Activated naive CD4-positive, alpha-beta T cell treated with anti-CD3 and anti-CD28 coated beads for 36 hours (primary cell): ENCODE measurements at regions of chr5 and their contacts with region 1.

Region 1: GRCh38 chr5:56270568-56271392 is 37.6 kb upstream of the ANKRD55 start:
- DNase-seq: peak; percentile 88
- H3K4me3 Mint-ChIP-seq: peak overlapping the region; percentile 17
- H3K27ac Mint-ChIP-seq: peak overlapping the region; percentile 61
- H3K4me1 Mint-ChIP-seq: peaks cover 17% of the 10 kb centered on the region
- H3K27me3 Mint-ChIP-seq: no peaks in the 10 kb centered on the region

Region 2: GRCh38 chr5:54969856-54970828 is 1300.6 kb before region 1 on chr5:
- CTCF ChIA-PET with region 1: no interaction called
- intact Hi-C with region 1: no loop called
- DNase-seq: no peak
- H3K4me3 Mint-ChIP-seq: no peak overlapping the region
- H3K27ac Mint-ChIP-seq: no peak overlapping the region
- H3K4me1 Mint-ChIP-seq: no peaks in the 10 kb centered on the region
- H3K27me3 Mint-ChIP-seq: no peaks in the 10 kb centered on the region

Region 3: DNA sequence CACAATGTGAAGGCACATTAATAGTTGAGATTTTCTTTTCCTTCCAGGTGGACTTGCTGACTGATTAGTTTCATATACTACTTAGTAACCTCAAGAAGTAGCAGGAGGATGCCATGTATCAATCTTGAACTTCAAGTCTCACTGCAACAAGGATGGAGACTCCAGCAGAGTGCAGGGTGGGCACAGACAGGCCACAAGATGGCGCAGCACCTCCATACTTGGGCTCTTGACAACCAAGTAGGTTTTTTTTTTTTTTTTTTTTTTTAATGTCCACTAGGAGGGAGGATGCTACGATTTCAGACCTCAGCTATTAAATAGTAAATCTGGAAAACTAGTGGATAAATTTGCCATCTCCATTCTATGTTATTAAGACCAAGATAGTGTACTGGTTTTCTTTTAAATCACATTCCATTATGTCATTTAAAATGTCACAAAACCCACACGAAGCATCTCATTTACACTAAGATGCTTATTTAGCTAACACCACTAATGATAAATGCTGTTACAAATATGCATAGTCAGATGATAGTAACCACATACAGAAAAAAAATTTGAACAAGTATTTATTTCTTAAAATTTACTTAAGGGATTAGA is 334.6 kb before region 1 on chr5:
- CTCF ChIA-PET with region 1: interaction called, 8 read pairs
- intact Hi-C with region 1: loop called (anchors 5 kb)
- DNase-seq: peak; percentile 93
- H3K4me3 Mint-ChIP-seq: no peak overlapping the region
- H3K27ac Mint-ChIP-seq: no peak overlapping the region
- H3K4me1 Mint-ChIP-seq: peaks cover 15% of the 10 kb centered on the region
- H3K27me3 Mint-ChIP-seq: no peaks in the 10 kb centered on the region

Region 4: GRCh38 chr5:56388229-56389010 is 117.6 kb after region 1 on chr5:
- CTCF ChIA-PET with region 1: interaction called, 4 read pairs
- intact Hi-C with region 1: loop called (anchors 1 kb)
- DNase-seq: no peak
- H3K4me3 Mint-ChIP-seq: no peak overlapping the region
- H3K27ac Mint-ChIP-seq: no peak overlapping the region
- H3K4me1 Mint-ChIP-seq: peaks cover 2% of the 10 kb centered on the region
- H3K27me3 Mint-ChIP-seq: no peaks in the 10 kb centered on the region

Region 5: GRCh38 chr5:56588636-56589480 is 318.1 kb after region 1 on chr5:
- CTCF ChIA-PET with region 1: interaction called, 4 read pairs
- intact Hi-C with region 1: loop called (anchors 5 kb)
- DNase-seq: peak; percentile 52
- H3K4me3 Mint-ChIP-seq: no peak overlapping the region
- H3K27ac Mint-ChIP-seq: no peak overlapping the region
- H3K4me1 Mint-ChIP-seq: peaks cover 38% of the 10 kb centered on the region
- H3K27me3 Mint-ChIP-seq: no peaks in the 10 kb centered on the region

Region 6: DNA sequence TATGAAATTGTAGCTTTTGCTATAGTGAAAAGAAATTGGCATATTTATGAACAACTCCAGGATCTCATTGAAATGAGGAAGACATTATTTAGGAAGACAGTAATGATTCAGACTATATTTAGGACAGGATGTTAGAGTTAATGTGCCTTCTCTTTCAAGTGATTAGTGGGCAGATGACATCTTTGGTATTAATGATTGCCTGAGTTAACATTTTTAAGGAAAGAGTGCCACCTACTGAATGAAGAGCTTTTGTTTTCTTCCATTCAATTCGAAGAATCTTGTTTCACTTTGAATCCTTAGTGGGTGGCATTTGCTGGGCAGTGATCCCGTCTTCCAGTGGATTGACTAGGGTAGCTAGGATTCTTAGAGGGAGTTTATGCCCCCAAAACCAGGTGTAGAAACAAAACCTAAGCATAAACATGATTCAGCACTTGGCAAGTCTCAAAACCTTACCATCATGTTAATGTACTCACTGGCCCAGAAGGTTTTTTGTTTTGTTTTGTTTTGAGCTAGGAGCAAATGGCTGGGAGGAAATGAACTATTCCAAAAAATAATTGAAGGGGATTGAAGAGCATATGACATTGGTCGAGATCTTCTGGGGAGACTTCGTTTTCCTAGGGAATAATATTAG is 567.7 kb after region 1 on chr5:
- CTCF ChIA-PET with region 1: interaction called, 82 read pairs
- intact Hi-C with region 1: loop called (anchors 1 kb)
- DNase-seq: no peak
- H3K4me3 Mint-ChIP-seq: peak overlapping the region; percentile 47
- H3K27ac Mint-ChIP-seq: peak overlapping the region; percentile 74
- H3K4me1 Mint-ChIP-seq: peaks cover 75% of the 10 kb centered on the region
- H3K27me3 Mint-ChIP-seq: no peaks in the 10 kb centered on the region

Region 7: DNA sequence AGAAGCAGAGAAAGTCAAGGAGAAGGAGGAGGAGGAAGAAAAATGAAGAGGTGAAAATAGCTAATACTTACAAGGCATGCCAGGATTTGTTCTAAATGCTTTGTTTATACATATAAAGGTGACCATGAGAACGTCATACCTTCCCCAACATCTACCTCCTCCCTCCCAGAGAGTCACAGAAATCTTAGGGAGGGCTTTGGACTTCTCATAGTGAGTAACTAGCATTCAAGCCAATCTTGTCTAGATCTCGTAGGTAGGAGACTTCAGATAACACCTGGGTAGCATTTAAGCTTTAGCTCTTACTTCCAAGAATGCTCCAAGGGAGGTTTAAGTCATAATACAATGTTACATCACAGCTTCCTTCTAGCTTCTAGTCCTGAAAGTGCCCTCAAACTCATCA is 866.6 kb after region 1 on chr5:
- CTCF ChIA-PET with region 1: interaction called, 4 read pairs
- intact Hi-C with region 1: loop called (anchors 1 kb)
- DNase-seq: no peak
- H3K4me3 Mint-ChIP-seq: no peak overlapping the region
- H3K27ac Mint-ChIP-seq: no peak overlapping the region
- H3K4me1 Mint-ChIP-seq: no peaks in the 10 kb centered on the region
- H3K27me3 Mint-ChIP-seq: no peaks in the 10 kb centered on the region

Region 8: GRCh38 chr5:57435701-57436134 is 1164.9 kb after region 1 on chr5:
- CTCF ChIA-PET with region 1: no interaction called
- intact Hi-C with region 1: loop called (anchors 5 kb)
- DNase-seq: no peak
- H3K4me3 Mint-ChIP-seq: no peak overlapping the region
- H3K27ac Mint-ChIP-seq: no peak overlapping the region
- H3K4me1 Mint-ChIP-seq: no peaks in the 10 kb centered on the region
- H3K27me3 Mint-ChIP-seq: peaks cover 2% of the 10 kb centered on the region